Uterus (tissue), 4 donors: ENCODE measurements at regions of chr10 and their contacts with region 1.

Region 1: GRCh38 chr10:128011175-128011979 is 104.5 kb downstream of the PTPRE start:
- DNase-seq: peak; percentile 58 to 84
- H3K4me3 ChIP-seq: no peak overlapping the region
- H3K27ac ChIP-seq: no peak overlapping the region
- H3K4me1 ChIP-seq: no peaks in the 10 kb centered on the region
- H3K27me3 ChIP-seq: no peaks in the 10 kb centered on the region
- CTCF ChIP-seq: peak; percentile 79 to 97 (median 92)
- POLR2A ChIP-seq: peak in 1 of 2 donors; percentile 11

Region 2: GRCh38 chr10:127906548-127907377 is 104.6 kb before region 1 on chr10 and contains the start of gene PTPRE:
- intact Hi-C with region 1: loop called (anchors 5 kb)
- DNase-seq: peak in 1 of 2 donors; percentile 53
- H3K4me3 ChIP-seq: peak within 1 kb of the TSS; percentile 20 to 48
- H3K27ac ChIP-seq: peak within 1 kb of the TSS; percentile 50 to 60
- H3K4me1 ChIP-seq: no peaks in the 10 kb centered on the region
- H3K27me3 ChIP-seq: no peaks in the 10 kb centered on the region
- CTCF ChIP-seq: peak; percentile 57 to 97 (median 79)
- POLR2A ChIP-seq: peak in 1 of 2 donors; percentile 32
- total RNA-seq, gene PTPRE: 9.4 to 18.9 (median 16.3) TPM